ENCODE measurements at regions of chr3 and their contacts with region 1.

Region 1: DNA sequence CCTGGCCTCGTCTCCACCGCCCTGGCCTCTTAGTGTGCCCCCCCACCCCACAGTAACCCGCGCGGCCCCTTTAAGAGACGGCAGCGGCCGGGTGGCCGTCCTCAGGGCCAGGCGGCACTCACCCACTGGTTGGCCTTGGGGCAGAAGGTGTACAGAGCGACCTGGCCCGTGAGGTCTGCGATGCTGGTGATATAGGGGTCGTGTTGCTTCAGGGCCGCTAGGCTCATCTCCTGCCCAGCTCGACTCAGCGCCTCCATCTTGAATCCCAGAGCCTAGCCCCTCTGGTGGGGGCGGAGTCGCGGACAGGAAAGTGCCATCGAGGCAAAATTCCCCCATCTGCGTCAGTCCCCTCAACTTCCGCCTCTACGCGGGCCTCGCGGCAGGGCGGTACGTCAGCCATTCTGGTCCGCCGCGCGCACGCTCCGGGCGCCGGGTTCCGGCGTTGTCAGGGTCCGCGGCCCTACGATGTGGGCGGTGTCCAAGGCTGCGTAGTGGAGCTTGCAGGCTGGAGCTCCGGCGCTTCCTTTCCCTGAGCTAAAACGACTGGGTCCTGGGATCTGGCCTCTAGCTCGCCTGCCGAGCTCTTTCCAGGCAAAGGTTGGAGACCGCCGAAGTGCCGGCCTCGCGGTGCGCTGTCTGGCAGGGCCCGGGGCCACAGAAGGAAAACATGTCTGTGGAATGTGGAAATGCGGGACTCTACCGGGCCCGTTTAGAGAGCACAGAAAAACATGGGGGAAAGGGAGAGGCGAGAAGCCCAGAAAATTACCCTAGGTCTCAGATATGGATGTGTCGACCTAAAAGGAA is at the start of gene DCP1A:
- DNase-seq: peak; percentile 95
- H3K4me3 Mint-ChIP-seq: peak within 1 kb of the TSS; percentile 98
- H3K27ac Mint-ChIP-seq: peak within 1 kb of the TSS; percentile 96
- H3K4me1 Mint-ChIP-seq: peaks cover 35% of the 10 kb centered on the region
- H3K27me3 Mint-ChIP-seq: no peaks in the 10 kb centered on the region
- total RNA-seq, gene DCP1A: 44.0 and 44.3 TPM in 2 replicates

Region 2: DNA sequence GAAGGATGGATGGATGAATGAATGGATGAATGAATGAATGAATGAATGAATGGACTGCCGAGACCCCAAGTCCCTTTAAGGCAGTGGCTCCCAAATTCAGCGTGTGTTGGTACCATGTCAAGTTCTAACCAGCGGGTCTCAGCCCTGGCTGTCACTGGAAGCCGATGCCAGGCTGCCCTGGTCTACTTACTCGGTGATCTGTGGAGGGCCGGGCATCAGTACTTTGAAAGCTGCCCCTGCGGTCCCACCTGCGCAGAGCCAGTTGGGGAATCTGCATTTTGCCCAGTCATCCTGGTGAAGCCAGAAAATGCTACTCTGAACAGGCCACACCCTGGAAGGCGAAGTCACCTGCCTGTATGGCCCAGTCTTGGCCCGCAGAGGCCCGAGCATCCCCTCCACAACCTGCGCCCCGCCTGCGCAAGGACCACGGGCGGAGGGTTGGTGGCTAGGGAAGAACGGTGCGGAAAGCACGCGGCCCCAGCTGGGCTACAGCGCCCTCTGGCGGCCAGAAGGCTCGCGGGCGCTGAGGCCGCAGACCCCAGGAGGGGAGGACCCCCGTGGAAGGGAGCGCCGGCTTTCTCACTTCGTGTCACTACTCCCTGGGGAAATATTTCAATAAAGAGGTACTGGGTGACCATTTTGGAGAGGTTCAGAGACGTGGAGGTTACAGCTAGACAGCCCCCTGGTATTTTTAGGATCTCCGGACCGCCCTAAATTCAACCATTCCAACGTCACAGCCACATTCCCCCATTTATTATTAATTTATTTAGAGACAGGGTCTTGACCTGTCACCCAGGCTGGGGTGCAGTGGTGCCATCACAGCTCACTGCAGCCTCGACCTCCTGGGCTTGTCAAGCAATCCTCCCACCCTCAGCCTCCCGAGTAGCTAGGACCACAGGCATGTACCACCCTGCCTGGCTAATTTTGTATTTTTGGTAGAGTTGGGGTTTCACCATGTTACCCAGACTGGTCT is 151.6 kb before region 1 on chr3:
- intact Hi-C with region 1: no loop called
- DNase-seq: peak; percentile 39
- H3K4me3 Mint-ChIP-seq: no peak overlapping the region
- H3K27ac Mint-ChIP-seq: no peak overlapping the region
- H3K4me1 Mint-ChIP-seq: peaks cover 6% of the 10 kb centered on the region
- H3K27me3 Mint-ChIP-seq: no peaks in the 10 kb centered on the region

Region 3: DNA sequence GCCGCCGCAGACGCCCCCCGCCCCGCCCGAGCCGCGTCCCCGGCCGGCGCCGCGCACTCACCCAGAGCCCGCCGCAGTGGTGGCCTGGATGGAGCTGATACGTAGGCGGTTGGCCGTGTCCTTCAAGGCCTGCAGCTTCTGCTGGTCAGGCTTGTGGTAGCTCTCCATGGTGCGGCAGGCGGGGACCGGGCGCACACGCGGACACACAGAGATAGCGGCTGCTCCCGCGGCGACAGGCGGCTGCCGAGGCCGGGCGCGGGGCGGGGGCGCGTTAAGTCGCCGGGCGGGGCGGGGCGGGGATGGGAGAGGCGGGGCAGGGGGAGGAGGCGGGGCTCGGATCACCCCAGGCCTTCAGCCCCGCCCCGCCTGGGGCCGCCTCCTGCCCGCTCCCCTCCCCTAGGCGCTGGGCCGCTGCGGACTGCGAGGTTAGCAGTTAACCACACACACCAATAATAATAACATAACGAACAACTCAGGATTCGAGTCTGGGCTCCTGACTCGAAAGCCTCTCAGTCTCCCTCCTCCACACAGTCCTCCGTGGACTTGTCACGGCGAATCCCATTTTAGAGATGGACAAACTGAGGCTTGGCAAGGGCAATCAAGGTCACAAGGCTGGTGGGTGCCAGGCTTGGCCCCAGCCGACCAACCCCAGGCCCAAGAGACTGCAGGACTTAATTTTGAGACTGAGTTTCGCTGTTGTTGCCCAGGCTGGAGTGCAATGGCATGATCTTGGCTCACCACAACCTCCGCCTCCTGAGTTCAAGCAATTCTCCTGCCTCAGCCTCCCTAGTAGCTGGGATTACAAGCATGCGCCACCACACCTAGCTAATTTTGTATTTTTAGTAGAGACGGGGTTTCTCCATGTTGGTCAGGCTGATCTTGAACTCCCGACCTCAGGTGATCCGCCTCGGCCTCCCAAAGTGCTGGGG is 91.4 kb before region 1 on chr3 and contains the start of gene TKT:
- intact Hi-C with region 1: loop called (anchors 5 kb)
- DNase-seq: peak; percentile 78
- H3K4me3 Mint-ChIP-seq: peak within 1 kb of the TSS; percentile 91
- H3K27ac Mint-ChIP-seq: peak within 1 kb of the TSS; percentile 85
- H3K4me1 Mint-ChIP-seq: peaks cover 25% of the 10 kb centered on the region
- H3K27me3 Mint-ChIP-seq: no peaks in the 10 kb centered on the region
- total RNA-seq, gene TKT: 363 and 374 TPM in 2 replicates

Region 4: GRCh38 chr3:53295410-53295809 is 52.1 kb before region 1 on chr3:
- intact Hi-C with region 1: loop called (anchors 5 kb)
- DNase-seq: no peak
- H3K4me3 Mint-ChIP-seq: no peak overlapping the region
- H3K27ac Mint-ChIP-seq: peak overlapping the region; percentile 33
- H3K4me1 Mint-ChIP-seq: no peaks in the 10 kb centered on the region
- H3K27me3 Mint-ChIP-seq: no peaks in the 10 kb centered on the region

Region 5: GRCh38 chr3:53311882-53312281 is 35.6 kb before region 1 on chr3:
- intact Hi-C with region 1: no loop called
- DNase-seq: no peak
- H3K4me3 Mint-ChIP-seq: no peak overlapping the region
- H3K27ac Mint-ChIP-seq: no peak overlapping the region
- H3K4me1 Mint-ChIP-seq: no peaks in the 10 kb centered on the region
- H3K27me3 Mint-ChIP-seq: no peaks in the 10 kb centered on the region

Region 6: GRCh38 chr3:53891497-53892285 is 544.2 kb after region 1 on chr3 and contains the start of gene SELENOK:
- intact Hi-C with region 1: loop called (anchors 2 kb)
- DNase-seq: peak; percentile 98
- H3K4me3 Mint-ChIP-seq: peak within 1 kb of the TSS; percentile 93
- H3K27ac Mint-ChIP-seq: peak within 1 kb of the TSS; percentile 97
- H3K4me1 Mint-ChIP-seq: peaks cover 47% of the 10 kb centered on the region
- H3K27me3 Mint-ChIP-seq: peaks cover 19% of the 10 kb centered on the region
- total RNA-seq, gene SELENOK: 73.0 and 81.0 TPM in 2 replicates

Measured in activated T-helper 2 cell treated with anti-CD3 and anti-CD28 coated beads, Interferon-gamma antibody, Interleukin-2, Interleukin-4, amounts not matched to agents 10 μg/mL and 5 μg/mL and 100 μg/mL, durations not matched to agents 14 hours and 24 hours and 36 hours (primary cell).